HEK293 (cell line): ENCODE measurements at regions of chr1 and their contacts with region 1.

Region 1: DNA sequence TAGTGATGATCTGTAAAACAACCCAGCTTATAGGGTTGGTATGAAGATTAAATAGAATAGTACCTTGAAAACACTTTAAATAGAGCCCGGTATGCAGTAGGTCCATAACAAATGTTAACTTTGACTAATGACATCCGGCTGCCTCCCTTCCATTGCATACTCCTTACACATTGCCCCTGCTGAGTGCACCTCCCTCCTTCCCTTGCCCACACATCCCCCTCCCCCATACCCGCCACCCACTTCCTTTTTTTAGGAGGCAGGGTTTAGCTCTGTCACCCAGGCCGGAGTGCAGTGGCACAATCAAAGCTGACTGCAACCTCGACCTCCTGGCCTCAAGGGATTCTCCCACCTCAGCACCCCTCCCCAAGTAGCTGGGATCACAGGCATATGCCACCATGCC is 24.4 kb upstream of the ZC3H12A start:
- H3K4me3 ChIP-seq: no peak overlapping the region
- H3K27ac ChIP-seq: no peak overlapping the region
- H3K4me1 ChIP-seq: no peaks in the 10 kb centered on the region
- CTCF ChIP-seq: no peak

Region 2: DNA sequence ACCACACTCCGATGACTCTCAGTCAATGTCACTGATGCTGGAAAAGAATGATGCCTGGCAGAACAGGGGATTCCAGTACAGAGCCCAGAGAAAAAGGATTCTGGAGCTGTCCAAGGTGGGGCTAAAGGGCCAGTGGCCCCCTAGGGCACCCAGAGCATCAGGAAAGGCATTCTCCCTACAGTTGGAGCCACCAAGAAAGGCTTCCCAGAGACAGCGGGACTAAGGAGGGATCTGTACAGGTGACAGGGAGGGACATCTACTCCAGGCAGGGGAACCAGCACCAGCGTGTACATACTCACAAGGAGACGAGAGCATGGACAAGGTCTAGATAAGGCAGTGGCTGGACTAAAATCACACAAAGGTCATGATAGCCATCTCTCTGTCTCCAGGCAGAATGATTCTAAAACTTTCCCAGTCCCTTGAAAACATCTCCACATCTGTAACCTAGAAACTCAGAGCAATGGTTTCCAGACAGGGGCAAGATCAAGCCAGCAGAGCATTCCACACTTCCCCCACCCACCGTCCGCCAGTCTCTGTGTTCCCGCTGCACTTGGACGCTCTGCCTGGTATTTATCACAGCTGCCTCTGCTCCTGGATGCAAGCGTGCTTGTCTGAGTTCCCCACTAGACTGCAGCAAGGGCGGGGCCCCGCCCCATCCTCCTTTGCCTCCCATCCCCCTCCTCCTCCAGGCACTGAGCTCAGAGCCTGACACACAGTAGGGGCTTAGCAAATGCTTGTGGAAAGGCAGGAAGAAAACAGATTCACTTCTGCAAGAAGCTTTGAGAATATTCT is 87.1 kb before region 1 on chr1:
- CTCF ChIA-PET with region 1: no interaction called
- POLR2A ChIA-PET with region 1: no interaction called
- H3K4me3 ChIP-seq: no peak overlapping the region
- H3K27ac ChIP-seq: no peak overlapping the region
- H3K4me1 ChIP-seq: no peaks in the 10 kb centered on the region
- CTCF ChIP-seq: no peak

Region 3: GRCh38 chr1:37465593-37466517 is 15.9 kb after region 1 on chr1:
- CTCF ChIA-PET with region 1: interaction called, 18 read pairs
- POLR2A ChIA-PET with region 1: no interaction called
- H3K4me3 ChIP-seq: no peak overlapping the region
- H3K27ac ChIP-seq: no peak overlapping the region
- H3K4me1 ChIP-seq: no peaks in the 10 kb centered on the region
- CTCF ChIP-seq: no peak

Region 4: GRCh38 chr1:37682334-37682987 is 232.5 kb after region 1 on chr1:
- CTCF ChIA-PET with region 1: interaction called, 58 read pairs
- POLR2A ChIA-PET with region 1: no interaction called
- H3K4me3 ChIP-seq: no peak overlapping the region
- H3K27ac ChIP-seq: no peak overlapping the region
- H3K4me1 ChIP-seq: no peaks in the 10 kb centered on the region
- CTCF ChIP-seq: peak; percentile 52; the same call in 1 of the 2 replicates